HepG2 (cell line): ENCODE measurements at regions of chr1 and their contacts with region 1.

Region 1: DNA sequence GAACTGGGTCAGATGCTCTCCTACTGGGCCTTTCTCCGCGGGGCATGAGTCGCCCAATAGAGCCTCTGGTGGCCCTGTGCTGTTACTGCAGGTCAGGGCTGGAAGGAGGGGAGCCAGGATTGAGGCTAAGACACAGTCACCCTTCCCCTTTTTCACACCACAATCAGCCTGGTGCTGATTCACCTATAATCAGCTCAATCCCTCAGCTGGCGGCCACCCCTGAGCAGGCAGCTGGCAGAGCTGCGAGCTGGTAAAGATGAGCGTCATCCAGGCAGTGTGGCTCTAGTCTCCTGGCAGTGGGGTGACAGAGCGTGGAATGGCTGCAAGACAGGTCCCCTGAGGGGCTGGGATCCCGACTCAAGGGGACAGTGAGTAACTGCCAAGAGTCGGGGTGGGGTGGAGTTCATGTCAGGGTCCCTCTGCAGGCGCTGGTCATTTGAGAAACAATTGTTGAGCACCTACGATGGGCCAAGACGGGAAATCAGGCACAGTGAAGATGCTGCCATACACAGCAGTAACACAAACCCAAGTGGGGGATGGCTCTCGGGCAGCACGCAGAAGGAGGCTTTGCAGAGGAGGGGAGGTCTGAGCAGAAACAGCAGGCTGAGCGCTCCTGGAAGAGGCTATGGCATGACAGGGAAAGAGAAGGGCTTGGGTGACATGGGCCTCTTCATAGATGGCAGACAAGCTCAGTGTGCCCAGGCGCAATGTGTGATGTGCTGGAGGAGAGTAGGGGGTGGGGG is 21.8 kb downstream of the ATF3 start:
- DNase-seq: peak; percentile 48
- ATAC-seq: peak; percentile 93
- H3K4me3 ChIP-seq: no peak overlapping the region
- H3K27ac ChIP-seq: no peak overlapping the region
- H3K4me1 ChIP-seq: peaks cover 28% of the 10 kb centered on the region
- H3K27me3 ChIP-seq: peaks cover under 1 to 27% of the 10 kb centered on the region in 2 experiments; a peak in 3 of 5 replicates
- CTCF ChIP-seq: peak; percentile 76
- EP300 ChIP-seq: no peak
- POLR2A ChIP-seq: no peak
- RAD21 ChIP-seq: peak; percentile 58

Region 2: GRCh38 chr1:212381397-212382035 is 248.8 kb before region 1 on chr1:
- CTCF ChIA-PET with region 1: no interaction called
- POLR2A ChIA-PET with region 1: no interaction called
- in situ Hi-C with region 1: no loop called
- intact Hi-C with region 1: no loop called
- DNase-seq: no peak
- ATAC-seq: no peak
- H3K4me3 ChIP-seq: no peak overlapping the region
- H3K27ac ChIP-seq: no peak overlapping the region
- H3K4me1 ChIP-seq: no peaks in the 10 kb centered on the region
- H3K27me3 ChIP-seq: no peaks in the 10 kb centered on the region
- CTCF ChIP-seq: no peak
- EP300 ChIP-seq: no peak
- POLR2A ChIP-seq: no peak
- RAD21 ChIP-seq: no peak

Region 3: GRCh38 chr1:212482384-212483281 is 147.7 kb before region 1 on chr1:
- CTCF ChIA-PET with region 1: interaction called, 12 read pairs
- POLR2A ChIA-PET with region 1: no interaction called
- in situ Hi-C with region 1: loop called (anchors 10 kb)
- intact Hi-C with region 1: loop called (anchors 1 kb)
- DNase-seq: no peak
- ATAC-seq: no peak
- H3K4me3 ChIP-seq: no peak overlapping the region
- H3K27ac ChIP-seq: no peak overlapping the region
- H3K4me1 ChIP-seq: peaks cover 20% of the 10 kb centered on the region
- H3K27me3 ChIP-seq: peaks cover 2 to 24% of the 10 kb centered on the region in 2 experiments; a peak in 1 of 5 replicates
- CTCF ChIP-seq: no peak
- EP300 ChIP-seq: no peak
- POLR2A ChIP-seq: no peak
- RAD21 ChIP-seq: no peak